Activated naive CD4-positive, alpha-beta T cell treated with anti-CD3 and anti-CD28 coated beads for 36 hours (primary cell): ENCODE measurements at regions of chr7 and their contacts with region 1.

Region 1: GRCh38 chr7:139230774-139231512 is at the start of gene UBN2:
- DNase-seq: peak; percentile 95
- H3K4me3 Mint-ChIP-seq: peak within 1 kb of the TSS; percentile 90
- H3K27ac Mint-ChIP-seq: peak within 1 kb of the TSS; percentile 75
- H3K4me1 Mint-ChIP-seq: peaks cover 20% of the 10 kb centered on the region
- H3K27me3 Mint-ChIP-seq: no peaks in the 10 kb centered on the region
- total RNA-seq, gene UBN2: 9.7 to 10.6 TPM

Region 2: GRCh38 chr7:138898255-138898654 is 332.7 kb before region 1 on chr7:
- CTCF ChIA-PET with region 1: no interaction called
- intact Hi-C with region 1: loop called (anchors 5 kb)
- DNase-seq: peak; percentile 54
- H3K4me3 Mint-ChIP-seq: no peak overlapping the region
- H3K27ac Mint-ChIP-seq: peak overlapping the region; percentile 75
- H3K4me1 Mint-ChIP-seq: peaks cover 43% of the 10 kb centered on the region
- H3K27me3 Mint-ChIP-seq: no peaks in the 10 kb centered on the region

Region 3: GRCh38 chr7:139104091-139104450 is 126.9 kb before region 1 on chr7:
- CTCF ChIA-PET with region 1: interaction called, 8 read pairs
- intact Hi-C with region 1: loop called (anchors 2 kb)
- DNase-seq: peak; percentile 78
- H3K4me3 Mint-ChIP-seq: peak overlapping the region; percentile 82
- H3K27ac Mint-ChIP-seq: peak overlapping the region; percentile 97
- H3K4me1 Mint-ChIP-seq: peaks cover 35% of the 10 kb centered on the region
- H3K27me3 Mint-ChIP-seq: no peaks in the 10 kb centered on the region

Region 4: GRCh38 chr7:139118234-139118804 is 112.6 kb before region 1 on chr7:
- CTCF ChIA-PET with region 1: no interaction called
- intact Hi-C with region 1: loop called (anchors 2 kb)
- DNase-seq: peak; percentile 76
- H3K4me3 Mint-ChIP-seq: peak overlapping the region; percentile 46
- H3K27ac Mint-ChIP-seq: peak overlapping the region; percentile 17
- H3K4me1 Mint-ChIP-seq: peaks cover 52% of the 10 kb centered on the region
- H3K27me3 Mint-ChIP-seq: no peaks in the 10 kb centered on the region

Region 5: DNA sequence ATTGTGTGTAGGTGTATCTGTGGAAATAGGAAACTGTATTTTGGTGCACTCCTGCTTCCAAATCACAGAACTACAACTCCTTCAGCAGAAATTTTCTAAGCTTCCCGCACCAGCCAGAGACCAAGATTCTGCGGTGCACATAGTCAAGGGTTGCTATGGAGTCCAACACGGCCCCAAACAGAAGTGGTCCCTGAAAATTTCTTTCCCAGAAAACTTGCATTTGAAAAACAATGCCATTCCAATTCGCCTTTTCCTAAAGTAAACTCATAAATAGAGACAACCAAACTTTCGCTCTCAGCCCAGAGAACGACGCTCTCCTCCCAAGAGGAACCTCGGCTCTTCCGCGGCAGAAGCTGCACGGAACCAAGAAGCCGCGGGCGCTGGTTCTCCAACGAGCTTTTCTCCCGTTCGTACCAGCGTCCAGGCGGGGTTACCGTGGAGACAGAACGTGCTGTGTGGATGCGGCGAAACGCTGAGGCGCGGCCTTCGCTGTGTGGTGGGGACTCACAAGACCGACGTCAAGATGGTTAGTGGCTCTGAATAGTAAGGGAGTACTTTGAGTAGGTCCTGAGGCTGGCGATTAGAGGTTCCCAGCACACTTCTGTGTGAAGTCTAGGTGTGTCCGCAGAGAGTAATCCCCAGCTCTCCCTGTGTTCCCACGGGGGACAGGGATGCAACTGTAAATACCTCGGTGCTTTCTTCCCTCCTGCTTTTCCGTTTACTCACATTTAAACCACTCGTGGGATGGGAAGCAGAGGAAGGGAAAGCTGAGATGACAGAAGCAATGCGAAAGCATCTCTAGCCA is 97.4 kb before region 1 on chr7:
- CTCF ChIA-PET with region 1: no interaction called
- intact Hi-C with region 1: loop called (anchors 1 kb)
- DNase-seq: peak; percentile 92
- H3K4me3 Mint-ChIP-seq: peak overlapping the region; percentile 84
- H3K27ac Mint-ChIP-seq: peak overlapping the region; percentile 68
- H3K4me1 Mint-ChIP-seq: peaks cover 22% of the 10 kb centered on the region
- H3K27me3 Mint-ChIP-seq: no peaks in the 10 kb centered on the region

Region 6: GRCh38 chr7:139359366-139360209 is 128.6 kb after region 1 on chr7 and contains the start of gene LUC7L2:
- CTCF ChIA-PET with region 1: no interaction called
- intact Hi-C with region 1: loop called (anchors 1 kb)
- DNase-seq: peak; percentile 100
- H3K4me3 Mint-ChIP-seq: peak within 1 kb of the TSS; percentile 93
- H3K27ac Mint-ChIP-seq: peak within 1 kb of the TSS; percentile 98
- H3K4me1 Mint-ChIP-seq: peaks cover 33% of the 10 kb centered on the region
- H3K27me3 Mint-ChIP-seq: no peaks in the 10 kb centered on the region
- total RNA-seq, gene LUC7L2: 132 to 138 TPM

Region 7: DNA sequence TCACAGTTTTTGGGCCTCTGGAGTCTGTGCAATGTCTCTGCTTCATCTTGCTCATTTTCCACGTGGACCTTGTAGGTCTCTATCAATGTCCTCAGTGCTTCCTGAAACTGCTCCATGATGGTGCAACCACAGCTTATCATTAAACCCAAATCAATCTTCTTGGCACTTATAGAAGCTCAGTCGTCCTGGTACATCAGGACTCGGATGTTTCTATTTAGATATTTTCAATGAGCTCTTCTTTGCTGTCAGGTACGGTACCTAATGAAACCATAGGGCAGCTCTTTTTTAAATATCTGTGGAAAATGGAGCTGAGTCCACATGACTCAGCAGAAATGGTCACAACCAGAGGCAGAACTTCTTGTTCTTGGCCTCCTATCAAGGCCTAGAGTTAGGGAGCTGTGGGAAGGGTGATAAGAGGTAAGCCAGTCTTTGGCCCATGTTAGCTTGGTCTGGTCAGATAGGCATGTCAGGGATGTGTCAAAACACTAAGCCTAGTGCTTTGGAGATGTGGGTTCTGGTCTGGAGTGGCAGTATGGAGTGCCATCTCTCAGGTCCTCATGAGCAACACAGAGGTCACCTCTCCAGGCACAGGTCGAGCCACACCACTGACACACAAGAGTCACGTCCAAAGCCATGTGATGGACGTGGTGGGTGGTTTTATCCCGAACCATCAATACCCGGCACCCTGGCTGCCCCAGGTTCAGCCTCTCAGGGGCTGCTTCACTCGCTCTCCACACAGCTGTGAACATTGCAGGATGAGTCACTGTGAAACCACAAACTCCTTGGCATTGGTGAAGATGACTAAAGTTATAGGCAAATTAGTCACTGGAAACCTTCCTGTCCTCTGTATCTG is 685.1 kb after region 1 on chr7:
- CTCF ChIA-PET with region 1: no interaction called
- intact Hi-C with region 1: no loop called
- DNase-seq: peak; percentile 87
- H3K4me3 Mint-ChIP-seq: no peak overlapping the region
- H3K27ac Mint-ChIP-seq: peak overlapping the region; percentile 19
- H3K4me1 Mint-ChIP-seq: peaks cover 24% of the 10 kb centered on the region
- H3K27me3 Mint-ChIP-seq: peaks cover 2% of the 10 kb centered on the region

Region 8: GRCh38 chr7:140165422-140165821 is 934.5 kb after region 1 on chr7:
- CTCF ChIA-PET with region 1: no interaction called
- intact Hi-C with region 1: loop called (anchors 5 kb)
- DNase-seq: peak; percentile 42
- H3K4me3 Mint-ChIP-seq: peak overlapping the region; percentile 39
- H3K27ac Mint-ChIP-seq: peak overlapping the region; percentile 95
- H3K4me1 Mint-ChIP-seq: peaks cover 79% of the 10 kb centered on the region
- H3K27me3 Mint-ChIP-seq: no peaks in the 10 kb centered on the region